ENCODE measurements at regions of chr4 and their contacts with region 1.

Region 1: GRCh38 chr4:38034986-38035882 is 75.0 kb downstream of the PTTG2 start:
- DNase-seq: peak in 1 of 5 donors; percentile 36
- ATAC-seq: peak in 3 of 4 donors; percentile 60 to 65 (median 65)
- H3K4me3 ChIP-seq: no peak overlapping the region
- H3K27ac ChIP-seq: peak overlapping the region in 1 of 12 donors; percentile 56
- H3K4me1 ChIP-seq: peaks cover 0 to 12% (median 1%) of the 10 kb centered on the region in 12 donors
- H3K27me3 ChIP-seq: no peaks in the 10 kb centered on the region
- CTCF ChIP-seq: peak; percentile 48 to 83 (median 70)
- POLR2A ChIP-seq: no peak

Region 2: GRCh38 chr4:37603070-37603468 is 432.2 kb before region 1 on chr4:
- intact Hi-C with region 1: loop called in 7 of 10 experiments (anchors 5 to 10 kb)
- DNase-seq: peak; percentile 80 to 92 (median 82)
- ATAC-seq: peak; percentile 89 to 96 (median 96)
- H3K4me3 ChIP-seq: no peak overlapping the region
- H3K27ac ChIP-seq: no peak overlapping the region
- H3K4me1 ChIP-seq: peaks cover 0 to 19% (median 0%) of the 10 kb centered on the region in 12 donors
- H3K27me3 ChIP-seq: no peaks in the 10 kb centered on the region
- CTCF ChIP-seq: peak; percentile 97 to 99 (median 98)
- POLR2A ChIP-seq: no peak

Region 3: GRCh38 chr4:37802068-37802666 is 233.1 kb before region 1 on chr4:
- intact Hi-C with region 1: loop called (anchors 1 to 5 kb)
- DNase-seq: peak in 4 of 5 donors; percentile 36 to 56 (median 42)
- ATAC-seq: peak; percentile 58 to 88 (median 84)
- H3K4me3 ChIP-seq: no peak overlapping the region
- H3K27ac ChIP-seq: no peak overlapping the region
- H3K4me1 ChIP-seq: peaks cover 0 to 4% (median 0%) of the 10 kb centered on the region in 12 donors
- H3K27me3 ChIP-seq: no peaks in the 10 kb centered on the region
- CTCF ChIP-seq: peak; percentile 16 to 74 (median 53)
- POLR2A ChIP-seq: no peak

Region 4: GRCh38 chr4:38179690-38180377 is 144.6 kb after region 1 on chr4:
- intact Hi-C with region 1: no loop called
- DNase-seq: peak; percentile 54 to 78 (median 68)
- ATAC-seq: peak in 3 of 4 donors; percentile 31 to 68 (median 68)
- H3K4me3 ChIP-seq: no peak overlapping the region
- H3K27ac ChIP-seq: no peak overlapping the region
- H3K4me1 ChIP-seq: peaks cover 0 to 60% (median 19%) of the 10 kb centered on the region in 12 donors
- H3K27me3 ChIP-seq: no peaks in the 10 kb centered on the region
- CTCF ChIP-seq: peak; percentile 89 to 96 (median 92)
- POLR2A ChIP-seq: no peak

Measured in heart left ventricle (tissue), 16 donors.